ENCODE measurements at regions of chr7 and their contacts with region 1.

Region 1: GRCh38 chr7:131071786-131072504 is 255.7 kb upstream of the MKLN1 start:
- DNase-seq: peak; percentile 51
- ATAC-seq: peak; percentile 10
- H3K4me3 Mint-ChIP-seq: no peak overlapping the region
- H3K27ac Mint-ChIP-seq: peak overlapping the region; percentile 38
- H3K4me1 Mint-ChIP-seq: peaks cover 49% of the 10 kb centered on the region
- H3K27me3 Mint-ChIP-seq: no peaks in the 10 kb centered on the region

Region 2: GRCh38 chr7:131057015-131057793 is 14.7 kb before region 1 on chr7:
- CTCF ChIA-PET with region 1: interaction called, 42 read pairs
- DNase-seq: peak; percentile 51
- ATAC-seq: peak; percentile 74
- H3K4me3 Mint-ChIP-seq: peak overlapping the region; percentile 53
- H3K27ac Mint-ChIP-seq: peak overlapping the region; percentile 80
- H3K4me1 Mint-ChIP-seq: peaks cover 43% of the 10 kb centered on the region
- H3K27me3 Mint-ChIP-seq: no peaks in the 10 kb centered on the region

Region 3: DNA sequence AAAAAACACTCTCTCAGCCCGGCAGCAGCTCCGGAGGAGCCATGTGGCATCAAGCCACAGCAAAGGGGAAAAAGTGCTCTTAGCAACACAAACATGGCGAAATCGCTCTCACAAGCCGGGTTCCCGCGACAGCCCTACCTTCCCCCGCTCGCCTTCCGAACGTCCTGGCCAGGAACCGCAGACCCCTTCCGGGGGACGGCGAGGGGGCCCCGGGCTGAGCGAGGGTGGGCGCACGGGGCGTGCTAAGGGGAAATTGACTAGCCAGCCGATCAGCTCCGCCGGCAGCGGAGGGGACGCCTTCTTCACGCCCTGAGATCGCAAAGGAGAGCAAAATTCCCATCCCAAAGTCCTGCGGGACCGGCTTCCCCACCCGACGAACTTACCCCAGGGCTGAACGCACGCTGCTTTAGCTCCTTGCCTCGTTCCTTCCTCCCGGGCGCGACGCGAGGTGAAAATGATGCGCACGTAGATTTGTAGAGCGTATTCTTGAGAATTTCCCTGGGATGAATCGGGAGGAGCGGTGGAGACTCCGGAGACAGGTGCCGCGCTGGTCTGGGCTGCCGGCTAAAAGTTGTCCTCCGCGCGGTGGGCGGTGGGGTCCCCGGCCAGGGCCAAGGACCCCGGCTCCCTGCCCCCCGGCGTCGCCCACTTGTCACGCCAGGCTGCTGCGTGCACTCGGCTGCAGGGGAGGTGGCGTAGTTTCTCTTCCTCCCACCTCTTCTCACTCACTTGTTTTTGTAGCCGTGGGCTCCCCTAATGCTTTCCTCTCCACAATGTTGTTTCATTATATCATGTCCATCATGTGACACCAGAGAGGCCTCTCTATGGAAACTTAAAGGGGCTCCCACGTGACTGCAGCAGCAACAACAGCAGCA is 35.6 kb after region 1 on chr7:
- CTCF ChIA-PET with region 1: interaction called, 18 read pairs
- DNase-seq: peak; percentile 91
- ATAC-seq: peak; percentile 45
- H3K4me3 Mint-ChIP-seq: peak overlapping the region; percentile 90
- H3K27ac Mint-ChIP-seq: peak overlapping the region; percentile 99
- H3K4me1 Mint-ChIP-seq: peaks cover 65% of the 10 kb centered on the region
- H3K27me3 Mint-ChIP-seq: no peaks in the 10 kb centered on the region

Region 4: DNA sequence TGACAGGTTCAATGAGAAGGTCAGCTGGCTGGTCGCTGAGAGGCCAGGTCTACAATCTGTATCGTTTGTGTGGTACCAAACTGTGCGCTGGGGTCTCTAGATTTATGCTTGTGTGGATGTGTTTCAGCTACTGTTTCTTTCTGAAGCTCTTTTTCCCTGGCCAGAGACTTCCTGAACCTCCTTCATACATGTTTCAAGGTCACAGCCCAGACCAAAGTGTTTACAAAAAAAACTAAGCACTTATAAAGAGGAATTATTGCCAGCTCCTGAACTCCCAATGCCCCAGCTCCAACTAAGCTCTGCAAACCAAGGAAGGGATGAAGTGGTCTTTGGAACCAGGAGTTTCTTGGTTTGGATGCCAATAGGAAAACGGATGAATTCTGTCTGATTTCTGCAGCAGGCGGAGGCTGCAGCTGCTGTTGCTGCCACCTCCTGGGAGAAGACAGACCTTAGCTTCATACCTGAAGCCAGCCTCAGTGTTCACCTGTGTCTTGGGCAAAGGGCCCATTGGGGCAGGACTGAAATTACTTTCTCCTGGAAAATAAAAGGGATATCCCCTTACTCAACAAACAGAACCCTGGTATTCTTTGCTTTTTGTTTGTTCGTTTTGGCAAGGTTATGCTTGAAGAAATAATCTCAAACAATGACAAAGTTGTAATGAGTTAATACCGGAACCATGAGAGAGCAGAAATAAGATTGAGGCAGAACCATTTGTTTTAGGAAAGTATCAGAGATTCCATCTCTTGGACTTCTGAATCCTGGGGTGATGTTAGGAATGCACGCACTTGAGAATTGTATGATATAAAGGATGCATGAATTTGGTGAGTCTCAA is 231.1 kb after region 1 on chr7:
- CTCF ChIA-PET with region 1: interaction called, 14 read pairs
- DNase-seq: no peak
- ATAC-seq: no peak
- H3K4me3 Mint-ChIP-seq: no peak overlapping the region
- H3K27ac Mint-ChIP-seq: no peak overlapping the region
- H3K4me1 Mint-ChIP-seq: no peaks in the 10 kb centered on the region
- H3K27me3 Mint-ChIP-seq: no peaks in the 10 kb centered on the region